ENCODE measurements at regions of chr12 and their contacts with region 1.

Region 1: GRCh38 chr12:52023182-52023975 is 16.6 kb downstream of the TAMALIN start:
- DNase-seq: peak; percentile 87 to 97 (median 89)
- ATAC-seq: peak; percentile 62
- H3K4me3 ChIP-seq: peak overlapping the region; percentile 54
- H3K4me3 Mint-ChIP-seq: peak overlapping the region; percentile 89
- H3K27ac ChIP-seq: peak overlapping the region; percentile 52 to 78
- H3K27ac Mint-ChIP-seq: peak overlapping the region; percentile 77
- H3K4me1 ChIP-seq: peaks cover 46% of the 10 kb centered on the region
- H3K4me1 Mint-ChIP-seq: peaks cover 39% of the 10 kb centered on the region
- H3K27me3 ChIP-seq: no peaks in the 10 kb centered on the region
- H3K27me3 Mint-ChIP-seq: no peaks in the 10 kb centered on the region
- CTCF ChIP-seq: peak; percentile 95

Region 2: DNA sequence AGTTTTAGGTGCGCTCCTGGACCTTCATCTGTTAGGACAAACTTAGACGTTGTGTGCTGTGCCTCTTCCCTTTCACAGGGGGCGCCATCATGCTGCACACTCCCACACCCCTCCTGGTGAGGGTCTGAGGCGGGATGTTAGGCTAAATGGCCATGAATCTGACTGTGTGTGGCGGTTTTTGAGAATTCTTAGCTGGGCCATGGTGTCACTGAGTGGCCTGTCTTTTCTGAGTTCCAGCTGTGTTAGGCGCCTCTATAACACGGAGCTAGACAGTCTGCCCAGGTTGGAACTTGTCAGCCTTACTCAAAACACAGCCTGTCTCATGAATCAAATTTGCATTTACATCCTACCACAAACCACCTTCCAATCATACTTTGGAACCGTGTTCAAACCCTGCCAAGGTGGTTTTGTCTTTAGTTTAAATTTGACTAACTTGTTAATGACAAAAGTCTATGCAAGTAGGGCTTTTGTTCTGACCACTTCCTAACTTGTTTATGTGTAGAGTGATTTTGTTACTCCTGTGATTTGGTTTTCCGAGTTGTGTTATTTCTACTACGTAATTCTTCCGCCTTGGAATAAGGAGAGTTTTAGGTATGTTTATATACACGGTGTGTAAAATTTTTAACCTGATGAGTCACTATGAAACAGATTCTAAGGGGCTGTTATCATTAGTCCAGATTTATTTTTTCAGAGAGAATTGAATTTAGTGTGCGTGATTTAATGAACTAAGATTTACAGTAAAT is 52.3 kb before region 1 on chr12:
- CTCF ChIA-PET with region 1: interaction called, 17 read pairs
- POLR2A ChIA-PET with region 1: interaction called, 4 read pairs
- intact Hi-C with region 1: no loop called
- DNase-seq: peak in 7 of 14 experiments; percentile 2 to 70 (median 33)
- ATAC-seq: peak; percentile 71
- H3K4me3 ChIP-seq: no peak overlapping the region
- H3K4me3 Mint-ChIP-seq: peak overlapping the region; percentile 72
- H3K27ac ChIP-seq: no peak overlapping the region
- H3K27ac Mint-ChIP-seq: peak overlapping the region; percentile 67
- H3K4me1 ChIP-seq: peaks cover 57% of the 10 kb centered on the region
- H3K4me1 Mint-ChIP-seq: peaks cover 72% of the 10 kb centered on the region
- H3K27me3 ChIP-seq: no peaks in the 10 kb centered on the region
- H3K27me3 Mint-ChIP-seq: no peaks in the 10 kb centered on the region
- CTCF ChIP-seq: peak; percentile 67

Region 3: GRCh38 chr12:52004042-52004648 is 19.2 kb before region 1 on chr12:
- CTCF ChIA-PET with region 1: interaction called, 184 read pairs
- POLR2A ChIA-PET with region 1: interaction called, 73 read pairs
- intact Hi-C with region 1: loop called (anchors 1 to 2 kb)
- DNase-seq: peak in 3 of 14 experiments; percentile 47 to 49 (median 48)
- ATAC-seq: no peak
- H3K4me3 ChIP-seq: no peak overlapping the region
- H3K4me3 Mint-ChIP-seq: no peak overlapping the region
- H3K27ac ChIP-seq: no peak overlapping the region
- H3K27ac Mint-ChIP-seq: peak overlapping the region; percentile 20
- H3K4me1 ChIP-seq: peaks cover 30% of the 10 kb centered on the region
- H3K4me1 Mint-ChIP-seq: peaks cover 21% of the 10 kb centered on the region
- H3K27me3 ChIP-seq: no peaks in the 10 kb centered on the region
- H3K27me3 Mint-ChIP-seq: no peaks in the 10 kb centered on the region
- CTCF ChIP-seq: peak; percentile 59

Region 4: GRCh38 chr12:52061850-52062592 is 38.6 kb after region 1 on chr12:
- CTCF ChIA-PET with region 1: interaction called, 149 read pairs
- POLR2A ChIA-PET with region 1: no interaction called
- intact Hi-C with region 1: no loop called
- DNase-seq: no peak
- ATAC-seq: no peak
- H3K4me3 ChIP-seq: no peak overlapping the region
- H3K4me3 Mint-ChIP-seq: no peak overlapping the region
- H3K27ac ChIP-seq: no peak overlapping the region
- H3K27ac Mint-ChIP-seq: no peak overlapping the region
- H3K4me1 ChIP-seq: no peaks in the 10 kb centered on the region
- H3K4me1 Mint-ChIP-seq: no peaks in the 10 kb centered on the region
- H3K27me3 ChIP-seq: no peaks in the 10 kb centered on the region
- H3K27me3 Mint-ChIP-seq: no peaks in the 10 kb centered on the region
- CTCF ChIP-seq: no peak

Region 5: DNA sequence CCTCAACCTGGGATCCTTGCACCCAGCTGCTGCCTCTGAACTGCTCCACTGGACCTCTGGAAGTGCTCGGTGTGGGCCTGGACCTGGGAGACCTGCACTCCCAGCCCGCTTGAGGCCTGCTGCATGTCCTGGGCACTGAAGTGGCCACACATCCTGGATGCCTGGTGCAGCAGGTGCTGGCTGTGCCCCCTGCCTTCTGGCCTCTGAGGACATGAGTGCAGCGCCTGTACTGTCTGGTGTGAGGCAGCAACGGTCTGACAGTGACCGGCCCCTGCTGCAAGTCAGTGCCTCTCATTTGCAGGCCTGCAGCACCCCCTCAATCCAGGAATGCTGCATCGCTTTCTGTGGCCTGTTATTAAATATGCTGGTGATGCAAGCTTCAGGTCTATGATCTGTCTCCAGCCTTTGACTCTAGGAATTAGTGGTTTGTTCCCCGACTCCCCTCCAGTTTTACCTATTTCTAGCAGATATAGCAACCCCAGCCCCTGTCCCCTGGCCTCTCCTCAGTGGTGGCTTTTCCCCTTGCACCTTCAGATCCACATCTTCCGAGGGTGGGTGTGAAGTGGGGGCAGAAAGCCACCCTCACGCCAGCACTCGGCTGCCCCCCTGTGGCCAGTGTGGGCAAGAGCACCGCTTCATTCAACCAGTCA is 59.7 kb after region 1 on chr12:
- CTCF ChIA-PET with region 1: interaction called, 103 read pairs
- POLR2A ChIA-PET with region 1: interaction called, 23 read pairs
- intact Hi-C with region 1: loop called (anchors 1 kb)
- DNase-seq: peak; percentile 49 to 83 (median 58)
- ATAC-seq: peak; percentile 83
- H3K4me3 ChIP-seq: no peak overlapping the region
- H3K4me3 Mint-ChIP-seq: no peak overlapping the region
- H3K27ac ChIP-seq: no peak overlapping the region
- H3K27ac Mint-ChIP-seq: no peak overlapping the region
- H3K4me1 ChIP-seq: peaks cover 18% of the 10 kb centered on the region
- H3K4me1 Mint-ChIP-seq: peaks cover 16% of the 10 kb centered on the region
- H3K27me3 ChIP-seq: peaks cover 0 to 4% of the 10 kb centered on the region in 2 experiments
- H3K27me3 Mint-ChIP-seq: peaks cover 8% of the 10 kb centered on the region
- CTCF ChIP-seq: peak; percentile 99

Region 6: DNA sequence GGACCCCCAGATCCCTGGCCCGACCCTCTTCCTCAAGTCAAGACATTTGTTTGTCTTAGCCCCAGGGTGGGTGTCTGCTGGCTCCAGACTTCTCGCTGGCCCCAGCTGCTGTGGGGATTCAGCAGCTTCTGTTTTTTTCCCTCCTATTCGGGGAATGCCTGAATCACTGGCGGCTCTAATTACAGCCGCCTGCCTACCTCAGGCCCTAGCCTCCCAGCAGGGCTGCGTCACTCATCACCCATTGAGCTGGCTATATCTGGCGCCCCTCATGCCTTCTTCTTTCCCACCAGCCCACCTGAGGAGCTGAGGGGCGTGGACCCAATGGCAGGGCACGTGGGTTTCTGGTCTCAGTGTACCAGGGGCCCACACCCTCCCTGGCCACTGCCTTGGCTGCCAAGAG is 158.4 kb after region 1 on chr12:
- CTCF ChIA-PET with region 1: no interaction called
- POLR2A ChIA-PET with region 1: no interaction called
- intact Hi-C with region 1: no loop called
- DNase-seq: no peak
- ATAC-seq: no peak
- H3K4me3 ChIP-seq: no peak overlapping the region
- H3K4me3 Mint-ChIP-seq: no peak overlapping the region
- H3K27ac ChIP-seq: no peak overlapping the region
- H3K27ac Mint-ChIP-seq: no peak overlapping the region
- H3K4me1 ChIP-seq: no peaks in the 10 kb centered on the region
- H3K4me1 Mint-ChIP-seq: no peaks in the 10 kb centered on the region
- H3K27me3 ChIP-seq: no peaks in the 10 kb centered on the region
- H3K27me3 Mint-ChIP-seq: no peaks in the 10 kb centered on the region
- CTCF ChIP-seq: no peak

Region 7: GRCh38 chr12:52951640-52952431 is 928.5 kb after region 1 on chr12:
- CTCF ChIA-PET with region 1: no interaction called
- POLR2A ChIA-PET with region 1: no interaction called
- intact Hi-C with region 1: no loop called
- DNase-seq: no peak
- ATAC-seq: no peak
- H3K4me3 ChIP-seq: no peak overlapping the region
- H3K4me3 Mint-ChIP-seq: no peak overlapping the region
- H3K27ac ChIP-seq: no peak overlapping the region
- H3K27ac Mint-ChIP-seq: no peak overlapping the region
- H3K4me1 ChIP-seq: peaks cover 22% of the 10 kb centered on the region
- H3K4me1 Mint-ChIP-seq: peaks cover 14% of the 10 kb centered on the region
- H3K27me3 ChIP-seq: no peaks in the 10 kb centered on the region
- H3K27me3 Mint-ChIP-seq: peaks cover 4% of the 10 kb centered on the region
- CTCF ChIP-seq: no peak

Region 8: DNA sequence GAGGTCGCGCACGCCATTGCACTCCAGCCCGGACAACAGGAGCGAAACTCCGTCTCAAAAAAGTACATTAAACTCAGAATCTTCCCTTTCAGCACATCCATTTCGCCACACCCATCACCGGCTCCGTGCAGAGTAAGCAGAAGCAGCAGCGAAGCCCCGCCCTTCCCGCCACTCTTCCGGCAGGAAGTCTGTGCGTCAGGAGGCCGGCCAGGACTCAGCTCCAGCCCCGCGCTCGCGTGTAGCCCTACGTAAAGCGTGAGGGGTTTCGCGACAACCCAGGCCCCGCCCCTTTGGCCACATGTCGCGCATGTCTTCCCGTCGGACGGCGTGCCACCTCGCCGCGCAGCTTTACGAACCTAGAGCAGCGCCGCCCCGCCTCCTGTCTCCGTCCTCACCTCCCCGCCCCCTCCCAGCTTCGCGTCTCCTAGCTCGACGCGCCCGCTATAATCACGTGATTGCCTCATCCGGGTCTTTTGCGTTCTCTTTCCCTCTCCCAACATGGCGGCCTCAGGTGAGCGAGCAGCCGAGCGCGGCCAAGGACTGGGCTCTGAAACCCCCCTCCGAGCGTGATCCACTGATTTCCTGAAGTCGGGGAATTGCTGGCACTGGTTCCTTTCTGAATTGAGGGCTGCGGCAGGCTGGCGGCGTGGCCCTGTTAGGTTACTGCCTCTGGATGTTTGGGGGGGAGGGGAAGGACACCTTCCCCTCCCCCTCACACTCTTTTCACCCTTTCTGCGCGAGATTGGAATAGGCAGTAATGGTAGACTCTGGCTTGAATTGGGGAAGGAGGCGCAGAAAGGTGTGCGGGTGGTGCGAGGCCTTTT is 982.8 kb after region 1 on chr12 and contains the start of gene EIF4B:
- CTCF ChIA-PET with region 1: interaction called, 4 read pairs
- POLR2A ChIA-PET with region 1: no interaction called
- intact Hi-C with region 1: loop called in 1 of 2 experiments (anchors 10 kb)
- DNase-seq: peak; percentile 98 to 100 (median 99)
- ATAC-seq: peak; percentile 85
- H3K4me3 ChIP-seq: peak within 1 kb of the TSS; percentile 100
- H3K4me3 Mint-ChIP-seq: peak within 1 kb of the TSS; percentile 99
- H3K27ac ChIP-seq: peak within 1 kb of the TSS; percentile 90 to 97
- H3K27ac Mint-ChIP-seq: peak within 1 kb of the TSS; percentile 99
- H3K4me1 ChIP-seq: peaks cover 50% of the 10 kb centered on the region
- H3K4me1 Mint-ChIP-seq: peaks cover 57% of the 10 kb centered on the region
- H3K27me3 ChIP-seq: no peaks in the 10 kb centered on the region
- H3K27me3 Mint-ChIP-seq: no peaks in the 10 kb centered on the region
- CTCF ChIP-seq: no peak
- total RNA-seq, gene EIF4B: 794 to 806 TPM

Measured in CD4-positive, alpha-beta T cell (primary cell).